AG04449 (cell line): ENCODE measurements at regions of chr1 and their contacts with region 1.

Region 1: DNA sequence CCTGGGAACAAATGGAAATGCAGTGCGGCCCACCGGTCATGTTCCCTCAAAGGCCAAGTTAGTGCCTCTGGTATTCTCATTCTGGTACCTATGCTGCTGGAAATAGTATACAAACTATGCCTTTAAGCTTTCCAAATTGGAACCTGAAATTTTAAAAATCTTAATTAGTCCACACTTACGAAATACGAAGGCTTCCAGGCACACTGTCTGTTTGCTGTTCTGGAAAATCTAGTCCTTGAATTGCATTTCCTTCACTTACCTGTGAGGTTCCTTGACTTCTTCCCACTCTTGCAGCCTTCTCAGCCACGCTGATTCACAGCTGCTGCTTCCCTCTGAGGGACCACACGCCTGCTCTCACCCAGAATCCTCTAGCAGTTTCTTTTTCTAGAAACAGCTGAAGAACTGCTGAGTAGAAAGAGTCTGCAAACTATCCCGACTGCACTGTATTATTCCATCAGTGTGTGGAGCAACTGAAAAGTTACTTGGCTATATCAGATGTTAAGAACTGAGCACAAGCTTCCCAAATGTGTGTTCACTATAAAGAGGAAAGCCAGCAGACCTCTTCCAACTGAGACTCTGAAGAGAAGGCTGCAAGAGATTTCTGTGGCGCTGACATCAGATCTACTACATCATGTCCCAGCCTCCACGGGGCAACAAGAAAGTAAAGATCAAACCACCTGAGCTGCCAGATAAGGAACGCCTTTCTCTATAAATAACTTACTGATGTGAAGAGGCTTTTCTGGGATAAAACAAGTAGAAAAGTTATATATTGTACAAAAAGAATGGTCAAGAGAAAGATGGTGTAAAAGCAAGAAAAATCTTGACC is 226.7 kb downstream of the RERE start:
- DNase-seq: no peak
- H3K4me3 ChIP-seq: no peak overlapping the region
- CTCF ChIP-seq: no peak

Region 2: DNA sequence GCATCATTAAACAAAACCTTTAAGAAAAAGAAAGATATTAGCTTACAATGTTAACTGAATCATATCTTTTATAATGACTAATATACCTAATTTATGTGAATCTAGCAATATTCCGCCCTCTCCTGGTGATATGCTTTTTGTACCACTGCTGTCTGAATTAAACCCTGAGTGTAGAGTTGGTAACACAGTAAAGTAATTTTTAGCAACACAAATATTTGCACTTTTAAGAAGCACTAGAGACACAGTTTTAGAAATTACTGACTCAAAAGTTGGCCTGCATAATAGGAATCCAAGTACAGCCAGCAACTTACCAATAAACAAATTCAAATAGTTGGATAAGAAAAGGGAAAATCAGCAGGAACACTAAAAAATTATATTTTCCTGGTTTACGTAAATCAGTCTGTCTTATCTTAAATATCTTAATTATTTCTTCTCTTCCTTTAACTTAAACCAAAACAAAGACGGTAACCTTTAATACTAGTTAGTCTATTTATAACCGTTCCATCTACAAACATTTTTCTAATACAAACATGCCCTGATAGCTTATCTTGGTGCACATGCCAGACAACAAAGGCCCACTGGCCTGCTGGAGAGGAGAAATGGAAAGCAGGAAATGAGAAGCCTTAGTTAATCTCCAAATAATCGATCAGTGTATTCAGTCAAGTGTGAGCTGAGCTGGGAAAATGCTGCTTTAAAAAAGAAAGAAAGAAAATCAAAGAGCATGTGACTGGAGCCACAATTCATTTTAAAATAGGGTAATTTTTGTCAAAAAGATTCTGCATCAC is 19.3 kb before region 1 on chr1:
- CTCF ChIA-PET with region 1: interaction called, 22 read pairs
- POLR2A ChIA-PET with region 1: no interaction called
- DNase-seq: no peak
- H3K4me3 ChIP-seq: no peak overlapping the region
- CTCF ChIP-seq: peak; percentile 9